Activated CD4-positive, alpha-beta memory T cell treated with anti-CD3 and anti-CD28 coated beads for 36 hours (primary cell): ENCODE measurements at regions of chr19 and their contacts with region 1.

Region 1: GRCh38 chr19:50461066-50461875 is 15.0 kb upstream of the EMC10 start:
- DNase-seq: peak; percentile 80
- H3K4me3 Mint-ChIP-seq: no peak overlapping the region
- H3K27ac Mint-ChIP-seq: no peak overlapping the region
- H3K4me1 Mint-ChIP-seq: peaks cover 13% of the 10 kb centered on the region
- H3K27me3 Mint-ChIP-seq: peaks cover 36% of the 10 kb centered on the region

Region 2: DNA sequence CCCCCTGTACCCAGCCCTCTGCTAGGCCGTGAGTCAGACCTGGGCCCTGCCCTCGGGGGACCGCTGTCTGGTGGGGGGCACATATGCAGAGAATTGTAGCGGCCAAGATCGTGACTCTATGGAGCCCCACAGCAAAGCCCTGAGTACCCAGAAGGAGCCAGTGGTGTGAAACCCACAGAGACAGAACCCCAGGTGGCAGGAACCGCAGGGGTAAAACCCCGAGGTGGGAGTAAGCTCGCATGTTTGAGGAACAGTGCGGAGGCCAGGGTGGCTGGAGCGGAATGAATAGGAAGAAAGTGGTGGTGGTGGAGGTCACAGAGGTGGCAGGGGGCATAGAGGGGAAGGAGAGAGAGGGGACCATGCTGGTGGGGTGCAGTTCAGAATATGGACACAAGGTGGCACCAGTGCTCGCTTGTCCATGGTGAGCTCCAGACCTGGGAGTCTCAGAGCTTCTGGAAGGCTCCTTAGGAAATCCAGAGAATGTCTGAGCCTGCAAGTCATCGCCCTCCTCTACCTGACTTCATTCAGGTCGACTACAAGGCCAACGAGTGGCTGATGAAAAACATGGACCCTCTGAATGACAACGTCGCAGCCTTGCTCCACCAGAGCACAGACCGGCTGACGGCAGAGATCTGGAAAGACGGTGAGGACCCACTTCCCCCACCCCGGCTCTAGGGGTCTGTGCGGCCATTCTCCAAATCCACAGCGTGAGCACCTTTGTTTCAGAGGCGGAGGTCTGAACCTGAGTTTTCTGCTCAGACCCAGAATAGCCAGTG is 209.0 kb before region 1 on chr19:
- CTCF ChIA-PET with region 1: interaction called, 9 read pairs
- POLR2A ChIA-PET with region 1: no interaction called
- intact Hi-C with region 1: loop called (anchors 2 kb)
- DNase-seq: peak; percentile 57
- H3K4me3 Mint-ChIP-seq: no peak overlapping the region
- H3K27ac Mint-ChIP-seq: no peak overlapping the region
- H3K4me1 Mint-ChIP-seq: no peaks in the 10 kb centered on the region
- H3K27me3 Mint-ChIP-seq: peaks cover 19% of the 10 kb centered on the region

Region 3: GRCh38 chr19:50368649-50369570 is 92.4 kb before region 1 on chr19:
- CTCF ChIA-PET with region 1: interaction called, 12 read pairs
- POLR2A ChIA-PET with region 1: no interaction called
- intact Hi-C with region 1: loop called (anchors 1 kb)
- DNase-seq: peak; percentile 88
- H3K4me3 Mint-ChIP-seq: peak overlapping the region; percentile 94
- H3K27ac Mint-ChIP-seq: peak overlapping the region; percentile 93
- H3K4me1 Mint-ChIP-seq: peaks cover 35% of the 10 kb centered on the region
- H3K27me3 Mint-ChIP-seq: no peaks in the 10 kb centered on the region

Region 4: DNA sequence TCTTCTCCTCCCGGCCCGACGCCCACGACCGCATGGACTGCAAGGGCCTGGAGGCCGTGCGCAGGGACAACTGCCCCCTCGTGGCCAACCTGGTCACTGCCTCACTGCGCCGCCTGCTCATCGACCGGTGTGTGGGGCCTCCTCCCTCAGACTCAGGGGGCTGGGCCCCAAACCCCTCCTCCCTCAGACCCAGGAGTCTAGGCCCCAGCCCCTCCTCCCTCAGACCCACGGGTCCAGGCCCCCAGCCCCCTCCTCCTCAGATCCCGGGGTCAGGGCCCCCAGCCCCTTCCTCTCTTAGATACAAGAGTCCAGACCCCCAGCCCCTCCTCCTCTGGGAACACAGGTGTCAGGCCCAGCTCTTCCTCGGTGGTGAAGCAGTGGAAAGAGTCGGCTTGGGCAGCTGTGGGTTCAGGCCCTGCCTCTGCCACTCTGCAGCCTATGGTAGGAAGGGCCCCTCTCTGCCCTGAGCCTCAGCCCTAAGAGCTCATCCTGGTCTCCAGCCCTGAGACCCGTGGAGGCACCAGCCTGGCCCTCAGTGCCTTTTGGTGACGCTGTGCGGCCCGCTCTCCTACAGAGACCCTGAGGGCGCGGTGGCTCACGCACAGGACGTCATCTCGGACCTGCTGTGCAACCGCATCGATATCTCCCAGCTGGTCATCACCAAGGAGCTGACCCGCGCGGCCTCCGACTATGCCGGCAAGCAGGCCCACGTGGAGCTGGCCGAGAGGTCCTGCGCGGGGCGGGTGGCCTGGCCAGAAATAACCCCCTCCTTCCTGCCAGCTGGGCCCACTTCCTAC is 46.2 kb before region 1 on chr19:
- CTCF ChIA-PET with region 1: interaction called, 5 read pairs
- POLR2A ChIA-PET with region 1: no interaction called
- intact Hi-C with region 1: loop called (anchors 5 kb)
- DNase-seq: peak; percentile 81
- H3K4me3 Mint-ChIP-seq: no peak overlapping the region
- H3K27ac Mint-ChIP-seq: no peak overlapping the region
- H3K4me1 Mint-ChIP-seq: peaks cover 3% of the 10 kb centered on the region
- H3K27me3 Mint-ChIP-seq: peaks cover 12% of the 10 kb centered on the region

Region 5: DNA sequence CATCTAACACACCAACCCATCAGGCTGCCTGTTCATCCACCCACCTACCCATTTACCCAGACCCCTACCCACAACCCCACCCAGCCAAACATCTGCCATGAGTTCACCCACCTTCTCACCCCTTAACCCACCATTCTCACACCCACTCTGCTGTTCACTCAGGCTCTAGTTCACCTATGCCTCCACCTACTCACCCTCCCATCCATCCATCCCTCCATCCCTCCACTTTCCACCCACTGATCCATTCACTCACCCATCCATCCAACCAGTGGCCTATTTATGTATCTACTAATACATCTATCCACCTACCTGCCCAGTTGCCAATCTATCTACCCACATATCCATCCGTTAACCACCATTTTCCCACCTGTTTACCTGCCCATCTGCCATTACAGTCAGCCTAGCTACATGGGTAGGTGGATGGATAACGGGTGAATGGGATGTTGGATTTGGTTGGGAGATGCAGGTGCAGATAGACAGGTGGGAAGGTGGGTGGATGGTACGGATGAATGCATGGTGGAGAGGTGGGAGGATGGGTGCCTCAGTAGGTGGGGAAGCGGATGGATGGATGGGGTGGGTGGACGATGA is 23.3 kb before region 1 on chr19:
- CTCF ChIA-PET with region 1: no interaction called
- POLR2A ChIA-PET with region 1: no interaction called
- intact Hi-C with region 1: no loop called
- DNase-seq: no peak
- H3K4me3 Mint-ChIP-seq: no peak overlapping the region
- H3K27ac Mint-ChIP-seq: no peak overlapping the region
- H3K4me1 Mint-ChIP-seq: no peaks in the 10 kb centered on the region
- H3K27me3 Mint-ChIP-seq: peaks cover 12% of the 10 kb centered on the region